Heart right ventricle (tissue), 16 donors: ENCODE measurements at regions of chr2 and their contacts with region 1.

Region 1: GRCh38 chr2:39620067-39620466 is 45.6 kb upstream of the TMEM178A start:
- DNase-seq: peak; percentile 20 to 46
- ATAC-seq: no peak
- H3K4me3 ChIP-seq: no peak overlapping the region
- H3K27ac ChIP-seq: no peak overlapping the region
- H3K4me1 ChIP-seq: peaks cover 0 to 29% (median 5%) of the 10 kb centered on the region in 9 donors
- H3K27me3 ChIP-seq: no peaks in the 10 kb centered on the region
- CTCF ChIP-seq: no peak

Region 2: GRCh38 chr2:38720613-38721241 is 899.3 kb before region 1 on chr2:
- intact Hi-C with region 1: no loop called
- DNase-seq: peak; percentile 73 to 80
- ATAC-seq: peak; percentile 86 to 94 (median 90)
- H3K4me3 ChIP-seq: no peak overlapping the region
- H3K27ac ChIP-seq: peak overlapping the region in 7 of 10 donors; percentile 11 to 78 (median 63)
- H3K4me1 ChIP-seq: peaks cover 0 to 38% (median 19%) of the 10 kb centered on the region in 9 donors
- H3K27me3 ChIP-seq: no peaks in the 10 kb centered on the region
- CTCF ChIP-seq: no peak

Region 3: DNA sequence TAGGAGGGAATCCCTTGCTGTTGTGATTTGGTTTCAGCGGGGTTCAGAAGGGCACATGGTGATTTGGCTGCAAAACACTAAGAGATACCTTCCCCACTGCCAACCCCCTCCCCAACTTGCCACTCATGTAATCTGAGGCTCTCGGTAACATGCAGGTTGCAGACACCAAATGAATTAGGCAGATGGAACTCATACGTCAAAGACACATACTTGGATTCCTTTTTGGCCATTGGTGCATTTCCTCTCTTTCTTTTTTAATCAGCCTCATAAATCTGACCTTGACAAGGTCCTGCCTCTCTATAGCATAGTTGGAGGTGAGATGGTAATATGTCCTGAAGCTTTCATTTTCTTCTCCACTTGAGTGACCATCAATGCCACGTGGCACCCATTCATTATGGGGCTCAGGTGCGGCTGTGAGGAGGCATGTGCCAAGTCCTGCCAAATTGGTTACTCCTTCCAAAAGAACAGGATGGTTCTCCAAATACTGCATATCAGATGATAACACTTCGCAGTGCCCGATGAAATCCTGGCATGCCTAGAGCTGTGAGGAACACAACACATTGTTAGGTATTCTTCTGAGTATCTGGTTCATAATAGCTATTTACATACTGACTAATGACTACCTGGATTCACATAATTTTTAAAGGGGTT is 37.3 kb after region 1 on chr2:
- intact Hi-C with region 1: loop called in 1 of 10 experiments (anchors 5 kb)
- DNase-seq: no peak
- ATAC-seq: peak in 2 of 8 donors; percentile 14
- H3K4me3 ChIP-seq: no peak overlapping the region
- H3K27ac ChIP-seq: no peak overlapping the region
- H3K4me1 ChIP-seq: peaks cover 0 to 9% (median 0%) of the 10 kb centered on the region in 9 donors
- H3K27me3 ChIP-seq: no peaks in the 10 kb centered on the region
- CTCF ChIP-seq: no peak

Region 4: DNA sequence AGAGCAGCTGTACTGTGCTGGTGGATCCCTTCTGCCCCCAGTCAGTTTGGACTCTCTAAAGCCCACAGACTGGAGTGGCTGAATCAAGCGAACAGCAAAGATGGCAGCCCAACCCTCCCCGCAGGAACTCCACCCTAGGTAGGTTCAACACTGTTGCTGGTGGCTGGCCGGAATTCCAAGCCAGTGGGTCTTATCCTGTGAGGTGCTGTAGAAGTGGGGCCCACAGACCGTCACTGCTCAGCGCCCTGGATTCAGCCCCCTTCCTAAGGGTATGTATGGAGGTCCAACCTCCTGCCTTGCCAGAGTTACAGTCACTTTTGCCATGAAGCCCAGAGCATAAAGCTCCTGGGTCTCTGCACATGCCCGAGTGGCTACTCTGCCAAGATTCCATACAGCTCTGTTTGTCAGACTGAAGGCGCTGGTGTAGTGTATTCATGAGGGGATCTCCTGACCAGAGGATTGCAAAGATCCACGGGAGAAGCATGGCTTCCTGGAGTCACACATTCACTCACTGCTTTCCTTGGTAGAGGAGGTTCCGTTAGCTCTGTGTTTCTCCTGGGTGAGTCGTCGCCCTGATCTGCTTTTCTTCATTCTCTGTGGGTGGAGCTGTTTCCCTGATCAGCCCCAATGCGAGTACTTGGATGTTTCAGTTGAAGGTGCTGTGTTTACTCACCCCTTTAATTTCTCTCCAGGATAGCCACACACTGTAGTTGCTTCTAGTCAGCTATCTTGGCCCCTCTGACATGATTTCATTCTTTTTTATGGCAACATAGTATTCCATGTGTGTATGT is 452.6 kb after region 1 on chr2:
- intact Hi-C with region 1: no loop called
- DNase-seq: no peak
- ATAC-seq: no peak
- H3K4me3 ChIP-seq: no peak overlapping the region
- H3K27ac ChIP-seq: no peak overlapping the region
- H3K4me1 ChIP-seq: no peaks in the 10 kb centered on the region
- H3K27me3 ChIP-seq: no peaks in the 10 kb centered on the region
- CTCF ChIP-seq: no peak